ENCODE measurements at regions of chr15 and their contacts with region 1.

Region 1: DNA sequence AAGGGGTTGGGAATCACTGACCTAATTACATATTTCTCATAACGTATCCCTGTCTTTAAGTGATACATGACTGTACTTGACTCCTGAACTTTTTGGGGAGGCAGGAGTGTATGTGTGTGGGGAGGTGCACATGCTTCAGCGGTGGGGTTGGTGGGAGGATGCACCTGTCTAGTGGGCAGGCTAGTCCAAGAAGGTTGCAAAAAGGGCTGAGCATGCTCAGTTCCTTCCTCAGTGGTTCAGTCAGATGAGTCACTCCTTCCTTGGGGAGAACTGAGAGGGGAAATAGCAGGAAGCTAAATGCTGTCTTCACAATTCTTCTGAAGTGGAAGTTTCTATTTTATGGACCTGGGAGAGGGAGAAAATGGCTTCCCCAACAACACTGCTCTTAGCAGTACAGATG is 24.6 kb upstream of the AP4E1 start:
- DNase-seq: peak in 1 of 5 donors; percentile 29
- ATAC-seq: peak in 3 of 4 donors; percentile 38 to 63 (median 45)
- H3K4me3 ChIP-seq: no peak overlapping the region
- H3K27ac ChIP-seq: peak overlapping the region in 1 of 12 donors; percentile 88
- H3K4me1 ChIP-seq: peaks cover 0 to 67% (median 6%) of the 10 kb centered on the region in 12 donors
- H3K27me3 ChIP-seq: no peaks in the 10 kb centered on the region
- CTCF ChIP-seq: no peak
- POLR2A ChIP-seq: no peak

Region 2: GRCh38 chr15:50675536-50676144 is 208.3 kb before region 1 on chr15:
- intact Hi-C with region 1: loop called in 6 of 10 experiments (anchors 2 to 5 kb)
- DNase-seq: no peak
- ATAC-seq: no peak
- H3K4me3 ChIP-seq: no peak overlapping the region
- H3K27ac ChIP-seq: no peak overlapping the region
- H3K4me1 ChIP-seq: peaks cover 0 to 58% (median 23%) of the 10 kb centered on the region in 12 donors
- H3K27me3 ChIP-seq: no peaks in the 10 kb centered on the region
- CTCF ChIP-seq: peak; percentile 69 to 83 (median 78)
- POLR2A ChIP-seq: no peak

Region 3: GRCh38 chr15:50953302-50953701 is 69.4 kb after region 1 on chr15:
- intact Hi-C with region 1: no loop called
- DNase-seq: no peak
- ATAC-seq: no peak
- H3K4me3 ChIP-seq: no peak overlapping the region
- H3K27ac ChIP-seq: no peak overlapping the region
- H3K4me1 ChIP-seq: no peaks in the 10 kb centered on the region
- H3K27me3 ChIP-seq: no peaks in the 10 kb centered on the region
- CTCF ChIP-seq: no peak
- POLR2A ChIP-seq: no peak